ENCODE measurements at regions of chr14 and their contacts with region 1.

Region 1: GRCh38 chr14:79011091-79011919 is 841.1 kb downstream of the NRXN3 start:
- DNase-seq: peak; percentile 46
- H3K4me3 ChIP-seq: no peak overlapping the region
- H3K27ac ChIP-seq: no peak overlapping the region
- H3K4me1 ChIP-seq: no peaks in the 10 kb centered on the region
- H3K27me3 ChIP-seq: no peaks in the 10 kb centered on the region
- CTCF ChIP-seq: peak; percentile 48

Region 2: GRCh38 chr14:80055667-80056496 is 1044.6 kb after region 1 on chr14:
- CTCF ChIA-PET with region 1: no interaction called
- POLR2A ChIA-PET with region 1: no interaction called
- intact Hi-C with region 1: loop called (anchors 10 kb)
- DNase-seq: peak; percentile 55
- H3K4me3 ChIP-seq: no peak overlapping the region
- H3K27ac ChIP-seq: no peak overlapping the region
- H3K4me1 ChIP-seq: no peaks in the 10 kb centered on the region
- H3K27me3 ChIP-seq: no peaks in the 10 kb centered on the region
- CTCF ChIP-seq: peak; percentile 74

Measured in A673 (cell line).